Endothelial cell of umbilical vein (primary cell): ENCODE measurements at regions of chr6 and their contacts with region 1.

Region 1: GRCh38 chr6:53725791-53726431 is 60.4 kb upstream of the KLHL31 start:
- DNase-seq: peak; percentile 70
- H3K4me3 ChIP-seq: no peak overlapping the region
- H3K27ac ChIP-seq: no peak overlapping the region
- H3K4me1 ChIP-seq: no peaks in the 10 kb centered on the region
- H3K27me3 ChIP-seq: no peaks in the 10 kb centered on the region
- CTCF ChIP-seq: peak; percentile 91 to 98
- POLR2A ChIP-seq: no peak

Region 2: GRCh38 chr6:53492860-53493634 is 232.9 kb before region 1 on chr6:
- CTCF ChIA-PET with region 1: interaction called, 81 read pairs
- POLR2A ChIA-PET with region 1: no interaction called
- dilution Hi-C with region 1: no loop called
- intact Hi-C with region 1: loop called (anchors 1 kb)
- DNase-seq: peak; percentile 74
- H3K4me3 ChIP-seq: peak overlapping the region in 1 of 3 experiments; percentile 31
- H3K27ac ChIP-seq: no peak overlapping the region
- H3K4me1 ChIP-seq: no peaks in the 10 kb centered on the region
- H3K27me3 ChIP-seq: no peaks in the 10 kb centered on the region
- CTCF ChIP-seq: peak; percentile 51 to 54
- POLR2A ChIP-seq: no peak

Region 3: GRCh38 chr6:53707108-53707897 is 18.6 kb before region 1 on chr6:
- CTCF ChIA-PET with region 1: interaction called, 24 read pairs
- POLR2A ChIA-PET with region 1: no interaction called
- dilution Hi-C with region 1: no loop called
- intact Hi-C with region 1: no loop called
- DNase-seq: no peak
- H3K4me3 ChIP-seq: no peak overlapping the region
- H3K27ac ChIP-seq: no peak overlapping the region
- H3K4me1 ChIP-seq: no peaks in the 10 kb centered on the region
- H3K27me3 ChIP-seq: no peaks in the 10 kb centered on the region
- CTCF ChIP-seq: no peak
- POLR2A ChIP-seq: no peak

Region 4: DNA sequence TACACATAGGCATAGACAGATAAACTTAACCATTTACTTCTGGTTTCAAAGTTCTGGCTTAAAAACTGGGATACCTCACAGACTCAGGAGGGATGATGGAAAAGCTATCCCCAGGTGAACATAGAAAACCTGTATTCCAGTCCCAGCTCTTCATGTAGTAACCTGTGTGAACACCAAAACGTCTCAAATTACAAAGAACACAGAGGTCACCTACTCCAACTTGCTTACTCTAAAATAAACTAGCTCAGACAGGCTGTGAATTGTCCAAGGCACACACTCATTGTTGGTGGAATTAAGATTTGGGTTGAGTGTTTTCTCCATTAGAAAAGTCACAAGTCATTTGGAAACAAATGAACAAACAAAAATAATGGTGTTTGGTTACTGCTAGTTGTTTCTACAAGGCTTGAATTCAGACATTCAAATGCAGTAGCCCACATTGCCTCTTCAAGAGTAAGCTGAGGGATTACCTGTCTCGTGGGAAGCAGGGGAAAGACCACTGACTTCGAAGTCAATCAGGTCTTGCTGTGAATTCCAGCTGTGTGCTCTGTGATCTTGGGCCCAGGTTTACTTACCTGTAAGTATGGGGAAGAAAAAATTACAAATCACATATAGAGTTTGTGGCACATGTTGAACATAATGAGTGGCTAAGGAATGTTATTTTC is 20.7 kb after region 1 on chr6:
- CTCF ChIA-PET with region 1: interaction called, 24 read pairs
- POLR2A ChIA-PET with region 1: no interaction called
- dilution Hi-C with region 1: no loop called
- intact Hi-C with region 1: no loop called
- DNase-seq: no peak
- H3K4me3 ChIP-seq: no peak overlapping the region
- H3K27ac ChIP-seq: no peak overlapping the region
- H3K4me1 ChIP-seq: no peaks in the 10 kb centered on the region
- H3K27me3 ChIP-seq: no peaks in the 10 kb centered on the region
- CTCF ChIP-seq: no peak
- POLR2A ChIP-seq: no peak

Region 5: GRCh38 chr6:53761036-53761435 is 35.1 kb after region 1 on chr6:
- CTCF ChIA-PET with region 1: interaction called, 13 read pairs
- POLR2A ChIA-PET with region 1: no interaction called
- dilution Hi-C with region 1: no loop called
- intact Hi-C with region 1: no loop called
- DNase-seq: no peak
- H3K4me3 ChIP-seq: no peak overlapping the region
- H3K27ac ChIP-seq: no peak overlapping the region
- H3K4me1 ChIP-seq: no peaks in the 10 kb centered on the region
- H3K27me3 ChIP-seq: no peaks in the 10 kb centered on the region
- CTCF ChIP-seq: no peak
- POLR2A ChIP-seq: no peak

Region 6: GRCh38 chr6:53943395-53943794 is 217.5 kb after region 1 on chr6:
- CTCF ChIA-PET with region 1: interaction called, 12 read pairs
- POLR2A ChIA-PET with region 1: no interaction called
- dilution Hi-C with region 1: no loop called
- intact Hi-C with region 1: no loop called
- DNase-seq: peak; percentile 77
- H3K4me3 ChIP-seq: no peak overlapping the region
- H3K27ac ChIP-seq: no peak overlapping the region
- H3K4me1 ChIP-seq: peaks cover 6% of the 10 kb centered on the region
- H3K27me3 ChIP-seq: no peaks in the 10 kb centered on the region
- CTCF ChIP-seq: no peak
- POLR2A ChIP-seq: no peak